Activated CD4-positive, alpha-beta T cell treated with anti-CD3 and anti-CD28 coated beads for 36 hours (primary cell): ENCODE measurements at regions of chr7 and their contacts with region 1.

Region 1: DNA sequence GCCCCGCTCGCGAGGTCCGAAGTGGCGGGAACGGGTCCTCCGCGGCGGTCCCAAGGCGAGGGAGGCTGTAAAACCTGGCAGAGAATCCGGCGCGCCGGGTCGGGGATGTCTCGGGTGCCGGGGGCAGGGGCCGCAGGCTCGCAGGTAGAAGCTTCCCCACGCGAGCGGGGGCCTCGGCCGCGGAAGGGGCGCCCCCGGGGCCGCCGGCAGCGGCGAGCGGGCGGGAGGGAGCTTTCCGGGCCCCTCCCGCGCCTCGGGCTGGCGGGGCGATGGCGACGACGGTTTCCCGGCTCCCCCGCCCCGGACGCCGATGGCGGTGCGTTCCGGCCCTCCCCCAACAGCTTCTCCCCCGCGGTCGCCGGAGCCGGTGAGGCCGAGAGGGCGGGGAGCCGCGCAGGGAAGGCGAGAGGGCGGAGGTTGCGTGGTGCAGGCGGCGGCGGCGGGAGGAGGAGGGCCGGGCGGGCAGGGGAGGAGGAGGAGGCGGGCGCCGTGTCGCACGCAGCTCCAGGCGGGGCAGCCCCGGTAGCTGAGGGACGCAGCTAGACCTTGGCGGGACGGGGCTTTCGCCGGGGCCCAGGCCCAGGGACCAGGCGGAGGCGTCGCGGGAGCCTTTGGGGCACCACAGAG is at the start of gene CUL1:
- DNase-seq: peak; percentile 91
- ATAC-seq: peak; percentile 67
- H3K4me3 Mint-ChIP-seq: peak within 1 kb of the TSS; percentile 91
- H3K27ac Mint-ChIP-seq: peak within 1 kb of the TSS; percentile 97
- H3K4me1 Mint-ChIP-seq: peaks cover 59% of the 10 kb centered on the region
- H3K27me3 Mint-ChIP-seq: no peaks in the 10 kb centered on the region
- total RNA-seq, gene CUL1: 72.7 to 76.7 TPM

Region 2: GRCh38 chr7:148503875-148504487 is 194.5 kb before region 1 on chr7:
- CTCF ChIA-PET with region 1: interaction called, 3 read pairs
- POLR2A ChIA-PET with region 1: no interaction called
- intact Hi-C with region 1: loop called (anchors 1 kb)
- DNase-seq: no peak
- ATAC-seq: no peak
- H3K4me3 Mint-ChIP-seq: no peak overlapping the region
- H3K27ac Mint-ChIP-seq: no peak overlapping the region
- H3K4me1 Mint-ChIP-seq: peaks cover 36% of the 10 kb centered on the region
- H3K27me3 Mint-ChIP-seq: peaks cover 24% of the 10 kb centered on the region

Region 3: DNA sequence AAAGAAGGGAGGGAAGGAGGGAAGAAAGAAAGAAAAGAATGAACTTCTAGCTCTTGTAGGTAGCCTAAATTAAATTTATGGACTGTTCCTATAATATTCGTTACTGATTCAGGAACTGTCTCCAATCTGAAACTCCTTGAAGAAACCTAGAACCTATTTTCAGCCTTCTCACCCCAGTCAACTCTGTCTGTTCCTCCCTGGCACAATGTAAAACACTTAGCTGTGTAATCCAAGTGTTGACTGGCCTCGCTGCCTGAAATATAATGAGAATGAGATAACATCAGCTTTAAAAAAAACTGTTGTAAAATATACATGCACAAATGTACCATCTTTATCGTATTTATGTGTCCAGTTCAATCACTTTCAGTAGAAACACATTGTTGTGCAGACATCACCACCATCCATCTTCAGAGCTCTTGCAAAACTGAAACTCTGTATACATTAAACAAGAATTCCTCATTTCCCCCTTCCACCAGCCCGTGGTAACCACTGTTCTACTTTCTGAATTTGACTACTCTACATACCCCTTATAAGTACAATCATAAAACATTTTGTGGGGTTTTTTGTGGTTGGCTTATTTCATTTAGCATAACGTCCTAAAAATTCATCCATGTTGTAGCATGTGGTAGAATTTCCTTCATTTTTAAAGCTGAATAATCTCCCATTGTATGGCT is 114.2 kb before region 1 on chr7:
- CTCF ChIA-PET with region 1: no interaction called
- POLR2A ChIA-PET with region 1: no interaction called
- intact Hi-C with region 1: loop called in 1 of 2 experiments (anchors 2 kb)
- DNase-seq: peak; percentile 43
- ATAC-seq: peak; percentile 93
- H3K4me3 Mint-ChIP-seq: no peak overlapping the region
- H3K27ac Mint-ChIP-seq: no peak overlapping the region
- H3K4me1 Mint-ChIP-seq: peaks cover 27% of the 10 kb centered on the region
- H3K27me3 Mint-ChIP-seq: peaks cover 4% of the 10 kb centered on the region

Region 4: GRCh38 chr7:148773334-148773733 is 74.8 kb after region 1 on chr7:
- CTCF ChIA-PET with region 1: interaction called, 4 read pairs
- POLR2A ChIA-PET with region 1: no interaction called
- intact Hi-C with region 1: loop called (anchors 2 to 5 kb)
- DNase-seq: peak; percentile 41
- ATAC-seq: peak; percentile 80
- H3K4me3 Mint-ChIP-seq: peak overlapping the region; percentile 16
- H3K27ac Mint-ChIP-seq: peak overlapping the region; percentile 77
- H3K4me1 Mint-ChIP-seq: peaks cover 25% of the 10 kb centered on the region
- H3K27me3 Mint-ChIP-seq: no peaks in the 10 kb centered on the region

Region 5: DNA sequence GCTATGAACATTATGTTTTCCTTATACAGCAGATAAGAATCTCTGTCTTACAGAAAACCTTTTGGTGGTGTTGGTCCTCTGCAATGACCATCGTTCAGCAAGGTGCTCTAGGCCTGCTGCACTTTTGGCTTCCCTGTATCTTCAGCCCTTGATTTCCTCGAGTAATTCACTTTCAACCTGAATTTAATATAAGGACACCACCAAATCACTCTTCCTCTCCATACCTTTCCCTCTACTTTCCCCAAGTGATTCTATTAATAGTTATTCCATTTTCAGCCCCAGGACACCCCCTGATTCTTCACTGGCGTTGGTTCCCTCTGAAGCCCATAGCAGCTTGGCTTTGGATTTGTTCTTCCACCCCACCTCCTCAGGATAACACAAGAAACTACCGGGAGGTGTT is 113.4 kb after region 1 on chr7:
- CTCF ChIA-PET with region 1: no interaction called
- POLR2A ChIA-PET with region 1: no interaction called
- intact Hi-C with region 1: no loop called
- DNase-seq: no peak
- ATAC-seq: no peak
- H3K4me3 Mint-ChIP-seq: no peak overlapping the region
- H3K27ac Mint-ChIP-seq: peak overlapping the region; percentile 19
- H3K4me1 Mint-ChIP-seq: no peaks in the 10 kb centered on the region
- H3K27me3 Mint-ChIP-seq: no peaks in the 10 kb centered on the region

Region 6: GRCh38 chr7:148834605-148835004 is 136.1 kb after region 1 on chr7:
- CTCF ChIA-PET with region 1: no interaction called
- POLR2A ChIA-PET with region 1: no interaction called
- intact Hi-C with region 1: no loop called
- DNase-seq: no peak
- ATAC-seq: no peak
- H3K4me3 Mint-ChIP-seq: no peak overlapping the region
- H3K27ac Mint-ChIP-seq: no peak overlapping the region
- H3K4me1 Mint-ChIP-seq: peaks cover 16% of the 10 kb centered on the region
- H3K27me3 Mint-ChIP-seq: no peaks in the 10 kb centered on the region

Region 7: DNA sequence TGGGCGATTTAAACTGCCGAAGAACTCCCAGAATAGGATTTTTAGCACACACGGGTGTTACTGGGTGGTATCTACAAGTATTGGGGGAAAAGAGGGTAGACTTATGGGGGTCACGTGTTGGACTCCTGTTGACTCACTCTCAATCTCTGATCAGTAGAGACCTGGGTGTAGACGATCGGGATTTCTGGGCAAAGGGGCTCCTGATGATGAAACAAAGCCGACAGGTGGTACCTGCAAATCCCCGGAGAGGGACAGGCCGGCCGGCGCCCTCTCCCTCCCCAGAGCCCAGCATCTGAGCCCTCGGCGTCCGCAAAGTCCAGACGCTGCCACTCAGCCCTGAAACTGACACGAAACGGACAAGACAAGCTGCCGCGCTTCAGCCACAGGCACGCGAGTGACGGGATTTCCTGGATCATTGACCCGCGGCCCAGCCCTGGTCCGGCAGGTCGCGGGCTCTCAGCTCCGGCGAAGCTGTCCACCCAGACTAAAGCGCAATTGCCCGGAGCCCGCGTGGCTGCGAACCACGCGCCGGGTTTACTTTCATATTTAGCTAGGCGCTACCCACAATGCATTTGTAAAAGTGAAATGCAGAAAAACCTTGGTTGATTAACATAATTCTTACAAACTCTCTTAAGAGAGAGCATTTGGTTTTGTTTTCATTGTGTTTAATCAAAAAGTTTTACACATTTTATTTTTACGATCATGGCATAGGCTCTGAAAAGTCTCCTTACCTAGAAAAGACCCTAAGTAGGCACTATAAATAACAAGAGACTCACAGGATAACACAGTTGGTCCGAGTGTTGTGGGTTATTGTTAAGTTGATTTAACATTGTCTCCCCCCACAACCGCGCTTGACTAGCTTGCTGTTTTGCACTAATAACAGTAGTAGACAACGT is 242.4 kb after region 1 on chr7:
- CTCF ChIA-PET with region 1: no interaction called
- POLR2A ChIA-PET with region 1: no interaction called
- intact Hi-C with region 1: loop called in 1 of 2 experiments (anchors 2 kb)
- DNase-seq: peak; percentile 78
- ATAC-seq: peak; percentile 68
- H3K4me3 Mint-ChIP-seq: peak overlapping the region; percentile 98
- H3K27ac Mint-ChIP-seq: peak overlapping the region; percentile 100
- H3K4me1 Mint-ChIP-seq: peaks cover 16% of the 10 kb centered on the region
- H3K27me3 Mint-ChIP-seq: no peaks in the 10 kb centered on the region

Region 8: DNA sequence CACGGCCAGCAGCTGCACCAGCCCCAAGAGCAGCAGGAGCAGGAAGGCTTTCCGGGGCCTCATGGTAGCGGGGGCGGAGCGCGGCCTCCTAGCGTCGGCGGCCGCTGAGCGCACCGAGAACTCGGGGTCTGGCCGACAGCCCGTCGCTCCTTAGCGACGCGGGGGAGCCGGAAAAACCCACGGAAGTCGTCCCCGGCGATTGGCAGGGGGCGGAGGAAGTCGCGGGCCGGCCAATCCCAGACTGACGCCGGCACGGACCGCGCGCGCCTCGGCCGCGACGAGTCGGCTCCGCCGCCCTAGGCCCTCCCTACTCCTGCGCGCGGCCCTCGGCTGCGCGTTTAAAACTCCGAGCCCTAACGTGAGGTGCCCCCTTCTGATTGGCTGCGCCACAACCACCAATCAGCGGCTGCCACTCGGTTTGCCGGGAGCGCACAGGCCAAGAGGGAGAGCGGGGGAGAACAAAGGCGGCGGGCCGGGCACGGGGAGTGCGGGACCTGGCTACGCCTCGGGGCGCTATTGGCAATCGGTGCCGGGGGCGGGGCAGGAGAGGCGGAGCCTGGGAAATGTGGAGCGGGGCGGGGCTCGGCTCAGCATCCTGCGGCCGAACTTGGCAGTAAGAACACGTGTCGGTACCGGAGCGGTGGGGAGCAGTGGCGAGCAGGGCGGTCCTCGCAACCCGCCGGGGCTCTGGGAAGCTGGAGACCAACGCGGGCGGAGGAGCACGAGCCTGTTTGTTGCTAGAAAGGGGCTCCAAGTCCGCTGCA is 330.0 kb after region 1 on chr7 and contains the start of gene PDIA4:
- CTCF ChIA-PET with region 1: no interaction called
- POLR2A ChIA-PET with region 1: interaction called, 6 read pairs
- intact Hi-C with region 1: loop called in 1 of 2 experiments (anchors 2 kb)
- DNase-seq: peak; percentile 100
- ATAC-seq: peak; percentile 92
- H3K4me3 Mint-ChIP-seq: peak within 1 kb of the TSS; percentile 99
- H3K27ac Mint-ChIP-seq: peak within 1 kb of the TSS; percentile 94
- H3K4me1 Mint-ChIP-seq: peaks cover 32% of the 10 kb centered on the region
- H3K27me3 Mint-ChIP-seq: no peaks in the 10 kb centered on the region
- total RNA-seq, gene PDIA4: 88.3 to 90.1 TPM

Region 9: DNA sequence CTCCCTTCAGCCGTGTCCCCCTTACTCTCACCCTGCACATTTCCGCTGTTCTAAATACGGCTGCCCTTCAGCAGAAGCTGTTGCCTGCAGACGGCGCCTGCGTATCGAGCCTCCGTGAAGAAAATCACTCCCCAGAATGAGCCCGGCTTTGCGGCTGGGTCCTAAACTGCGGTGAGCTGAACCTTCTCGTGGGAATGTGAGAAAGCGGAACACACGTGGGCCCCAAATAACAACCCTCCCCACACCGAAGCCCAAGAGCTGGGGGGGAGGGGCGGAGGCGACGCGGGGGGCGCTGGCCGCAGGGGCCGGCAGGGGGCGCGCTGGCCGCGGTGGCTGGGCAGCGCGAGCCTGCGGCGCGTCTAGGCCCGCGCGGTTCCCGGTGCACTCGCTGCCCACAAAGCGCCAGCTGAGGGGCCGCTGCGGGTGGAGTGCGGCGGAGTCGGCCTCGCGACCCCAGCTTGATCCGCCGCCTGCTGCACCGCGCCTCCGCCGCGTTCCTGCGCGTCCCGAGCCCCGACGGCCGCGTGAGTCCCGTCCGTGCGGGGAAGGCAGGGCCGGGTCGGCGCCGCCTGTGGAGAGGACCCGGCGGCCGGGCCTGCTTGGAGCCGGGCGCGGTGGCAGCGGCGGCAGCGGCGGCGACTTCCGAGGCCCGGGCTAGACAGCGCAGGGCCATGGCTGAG is 448.7 kb after region 1 on chr7 and contains the start of gene ZNF398:
- CTCF ChIA-PET with region 1: no interaction called
- POLR2A ChIA-PET with region 1: no interaction called
- intact Hi-C with region 1: loop called in 1 of 2 experiments (anchors 5 kb)
- DNase-seq: peak; percentile 87
- ATAC-seq: peak; percentile 71
- H3K4me3 Mint-ChIP-seq: peak within 1 kb of the TSS; percentile 98
- H3K27ac Mint-ChIP-seq: peak within 1 kb of the TSS; percentile 99
- H3K4me1 Mint-ChIP-seq: peaks cover 34% of the 10 kb centered on the region
- H3K27me3 Mint-ChIP-seq: no peaks in the 10 kb centered on the region
- total RNA-seq, gene ZNF398: 9.6 to 10.5 TPM